ENCODE measurements at regions of chr15 and their contacts with region 1.

Region 1: DNA sequence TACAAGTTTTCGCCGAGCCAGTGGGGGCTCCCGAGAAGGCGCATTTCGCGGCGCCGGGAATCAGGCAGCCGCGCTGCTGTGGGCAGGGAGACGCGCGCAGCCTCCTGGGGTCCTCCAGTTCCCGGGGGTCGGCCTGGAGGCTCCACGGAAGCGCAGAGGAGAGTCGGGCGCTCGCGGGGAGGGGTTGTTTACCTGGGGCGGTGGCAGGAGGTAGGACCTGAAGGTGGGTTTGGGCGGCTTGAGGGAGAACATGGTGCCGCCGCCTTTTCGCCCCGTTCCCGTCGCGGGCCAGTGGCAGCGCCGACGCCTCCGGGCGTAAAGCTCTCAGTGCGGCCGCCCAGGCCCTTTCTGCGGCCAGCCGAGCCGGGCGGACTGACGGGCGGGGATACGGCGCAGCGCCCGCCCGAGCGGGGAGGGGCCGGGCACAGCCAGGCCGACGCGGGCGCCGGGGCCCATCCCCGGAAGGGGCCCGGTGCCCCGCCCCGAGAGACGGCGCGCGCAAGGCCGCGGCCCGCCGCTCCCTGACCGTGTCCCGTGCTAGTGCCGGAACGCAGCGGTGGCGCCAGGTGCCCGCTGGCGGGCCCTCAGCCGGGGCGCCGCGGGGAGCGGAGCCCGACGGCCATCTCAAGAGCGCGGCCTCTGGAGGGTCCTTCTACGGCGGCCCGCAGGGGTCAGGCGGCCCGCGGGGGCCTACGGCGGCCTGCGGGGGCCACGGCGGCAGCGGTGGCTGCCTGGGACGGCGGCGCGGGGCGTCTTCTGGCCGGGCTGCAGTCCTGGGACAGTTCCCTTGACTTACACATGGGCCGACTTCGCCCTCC is at the start of gene MTMR10:
- DNase-seq: peak; percentile 88
- ATAC-seq: peak; percentile 98 to 99
- H3K4me3 ChIP-seq: peak within 1 kb of the TSS; percentile 81
- H3K27ac ChIP-seq: peak within 1 kb of the TSS; percentile 96
- H3K4me1 ChIP-seq: peaks cover 40% of the 10 kb centered on the region
- H3K27me3 ChIP-seq: no peaks in the 10 kb centered on the region
- CTCF ChIP-seq: no peak
- total RNA-seq, gene MTMR10: 42.4 TPM

Region 2: DNA sequence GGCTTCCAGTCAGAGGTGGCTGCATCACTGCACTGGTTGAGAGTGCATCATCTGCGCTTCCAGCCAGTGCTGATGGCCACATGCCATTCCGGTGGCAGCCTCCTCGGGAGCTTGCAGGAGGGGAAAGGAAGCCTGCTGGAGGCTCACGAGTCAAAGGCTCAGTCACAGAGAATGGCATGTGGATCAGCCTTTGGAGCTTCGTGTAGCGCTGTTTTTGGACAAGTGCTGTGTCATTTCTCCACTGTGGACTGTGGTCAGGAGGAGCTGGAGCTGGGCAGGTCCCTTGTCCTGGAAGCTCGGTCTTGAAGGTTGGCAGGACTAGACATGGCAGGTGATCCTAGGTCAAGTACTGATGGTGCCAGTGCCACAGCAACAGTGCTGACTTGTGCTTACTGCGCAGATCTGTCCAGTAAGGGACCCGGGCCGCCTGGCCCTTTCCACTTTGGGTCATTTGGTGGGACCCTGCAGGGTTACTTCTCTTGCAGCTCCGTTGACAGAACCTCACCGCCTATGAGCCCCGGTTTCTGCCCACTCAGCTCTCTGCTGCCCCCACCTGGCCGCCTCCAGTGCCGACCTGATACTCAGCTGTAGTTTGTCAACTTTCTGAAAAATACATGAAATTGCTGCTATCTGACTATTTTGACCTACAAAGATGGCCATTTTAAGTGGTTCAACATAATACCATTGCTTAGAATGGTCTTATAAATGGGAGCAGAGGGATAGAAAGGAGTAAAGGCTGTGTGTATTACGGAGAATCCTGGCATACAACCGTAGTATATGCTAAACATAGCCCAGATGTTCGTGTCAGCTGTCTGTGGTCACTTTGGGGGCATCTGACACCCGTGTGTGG is 137.7 kb after region 1 on chr15:
- intact Hi-C with region 1: loop called (anchors 10 kb)
- DNase-seq: peak; percentile 83
- ATAC-seq: peak; percentile 90 to 91
- H3K4me3 ChIP-seq: no peak overlapping the region
- H3K27ac ChIP-seq: no peak overlapping the region
- H3K4me1 ChIP-seq: peaks cover 4% of the 10 kb centered on the region
- H3K27me3 ChIP-seq: no peaks in the 10 kb centered on the region
- CTCF ChIP-seq: peak; percentile 92